ENCODE measurements at regions of chr21 and their contacts with region 1.

Region 1: GRCh38 chr21:29671728-29672127 is 268.1 kb downstream of the GRIK1 start:
- DNase-seq: no peak
- H3K4me3 ChIP-seq: no peak overlapping the region
- H3K4me3 Mint-ChIP-seq: no peak overlapping the region
- H3K27ac Mint-ChIP-seq: no peak overlapping the region
- H3K4me1 ChIP-seq: peaks cover 15% of the 10 kb centered on the region
- H3K4me1 Mint-ChIP-seq: peaks cover 15% of the 10 kb centered on the region
- H3K27me3 ChIP-seq: no peaks in the 10 kb centered on the region
- H3K27me3 Mint-ChIP-seq: peaks cover 21% of the 10 kb centered on the region
- CTCF ChIP-seq: no peak

Region 2: GRCh38 chr21:29581393-29581792 is 90.3 kb before region 1 on chr21:
- CTCF ChIA-PET with region 1: no interaction called
- POLR2A ChIA-PET with region 1: no interaction called
- intact Hi-C with region 1: loop called (anchors 2 kb)
- DNase-seq: peak; percentile 27 to 32
- H3K4me3 ChIP-seq: no peak overlapping the region
- H3K4me3 Mint-ChIP-seq: no peak overlapping the region
- H3K27ac Mint-ChIP-seq: no peak overlapping the region
- H3K4me1 ChIP-seq: peaks cover 26% of the 10 kb centered on the region
- H3K4me1 Mint-ChIP-seq: peaks cover 10% of the 10 kb centered on the region
- H3K27me3 ChIP-seq: no peaks in the 10 kb centered on the region
- H3K27me3 Mint-ChIP-seq: no peaks in the 10 kb centered on the region
- CTCF ChIP-seq: no peak

Region 3: DNA sequence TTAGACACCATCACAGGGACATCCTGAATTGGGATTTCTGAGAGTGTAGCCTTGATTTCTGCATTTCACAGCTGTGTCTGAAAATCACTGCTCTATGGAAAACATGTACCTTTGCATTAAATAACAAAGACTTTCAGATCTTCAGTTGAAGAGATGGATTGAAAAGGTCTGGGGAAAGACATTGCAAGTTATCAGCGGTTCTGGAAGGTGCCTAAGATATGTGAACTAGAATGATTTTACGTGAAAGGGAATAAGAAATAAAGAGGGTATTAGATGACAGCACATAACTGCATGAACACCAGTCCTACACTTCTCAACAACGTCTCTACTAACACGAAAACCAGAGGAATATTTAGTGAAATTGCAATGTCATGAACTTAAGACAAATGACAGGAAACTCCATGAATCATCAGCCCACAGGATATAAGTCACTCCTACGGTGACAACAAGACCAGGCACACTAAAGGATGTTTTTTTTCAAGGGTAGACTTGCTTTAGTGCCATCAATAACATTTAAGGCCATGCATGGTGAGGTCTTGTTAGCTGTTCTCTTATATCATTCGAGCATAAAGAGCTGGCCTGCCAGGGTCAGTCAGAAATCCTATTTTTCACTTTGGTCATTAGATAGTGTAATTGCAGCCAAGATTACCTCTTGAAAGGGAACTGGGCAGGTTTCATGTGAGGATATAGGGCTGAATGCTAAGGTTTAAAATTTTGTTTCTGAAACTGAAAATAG is 15.1 kb before region 1 on chr21:
- CTCF ChIA-PET with region 1: no interaction called
- POLR2A ChIA-PET with region 1: no interaction called
- intact Hi-C with region 1: loop called (anchors 1 kb)
- DNase-seq: no peak
- H3K4me3 ChIP-seq: no peak overlapping the region
- H3K4me3 Mint-ChIP-seq: no peak overlapping the region
- H3K27ac Mint-ChIP-seq: no peak overlapping the region
- H3K4me1 ChIP-seq: peaks cover 33% of the 10 kb centered on the region
- H3K4me1 Mint-ChIP-seq: no peaks in the 10 kb centered on the region
- H3K27me3 ChIP-seq: no peaks in the 10 kb centered on the region
- H3K27me3 Mint-ChIP-seq: no peaks in the 10 kb centered on the region
- CTCF ChIP-seq: no peak

Region 4: DNA sequence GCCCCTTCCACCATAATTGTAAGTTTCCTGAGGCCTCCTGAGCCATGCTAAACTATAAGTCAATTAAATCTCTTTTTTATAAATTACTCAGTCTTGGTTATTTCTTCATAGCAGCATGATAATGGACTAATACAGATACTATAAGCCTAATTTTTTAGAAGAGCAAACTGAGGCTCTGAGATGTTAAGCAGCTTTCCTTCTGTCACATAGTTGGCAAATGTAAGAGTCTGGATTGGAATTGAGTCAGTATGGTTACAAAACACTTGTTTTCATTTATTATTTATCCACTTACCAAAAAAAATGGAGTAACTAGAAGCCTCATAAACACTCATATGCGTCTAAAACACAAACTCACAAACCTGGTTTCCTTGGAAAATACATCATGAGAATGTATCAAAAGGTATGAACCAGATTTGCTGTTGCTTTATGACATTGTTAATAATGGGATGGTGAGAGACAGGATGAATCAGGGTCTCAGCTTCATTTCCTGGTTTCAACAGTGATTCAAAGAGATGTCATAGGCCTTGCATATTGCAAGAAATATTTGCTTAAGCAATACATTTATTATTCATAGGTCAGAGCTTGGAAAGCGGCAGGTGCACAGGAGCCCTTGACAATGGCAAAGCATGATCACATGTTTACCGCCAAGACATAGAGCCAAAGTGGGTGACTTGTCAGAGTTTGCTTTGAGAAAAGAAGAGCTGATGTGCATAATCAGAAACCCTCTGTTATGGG is 46.5 kb after region 1 on chr21:
- CTCF ChIA-PET with region 1: no interaction called
- POLR2A ChIA-PET with region 1: no interaction called
- intact Hi-C with region 1: no loop called
- DNase-seq: no peak
- H3K4me3 ChIP-seq: no peak overlapping the region
- H3K4me3 Mint-ChIP-seq: no peak overlapping the region
- H3K27ac Mint-ChIP-seq: no peak overlapping the region
- H3K4me1 ChIP-seq: no peaks in the 10 kb centered on the region
- H3K4me1 Mint-ChIP-seq: no peaks in the 10 kb centered on the region
- H3K27me3 ChIP-seq: no peaks in the 10 kb centered on the region
- H3K27me3 Mint-ChIP-seq: peaks cover 9% of the 10 kb centered on the region
- CTCF ChIP-seq: no peak

Measured in Caco-2 (cell line).